ENCODE measurements at regions of chr12 and their contacts with region 1.

Region 1: DNA sequence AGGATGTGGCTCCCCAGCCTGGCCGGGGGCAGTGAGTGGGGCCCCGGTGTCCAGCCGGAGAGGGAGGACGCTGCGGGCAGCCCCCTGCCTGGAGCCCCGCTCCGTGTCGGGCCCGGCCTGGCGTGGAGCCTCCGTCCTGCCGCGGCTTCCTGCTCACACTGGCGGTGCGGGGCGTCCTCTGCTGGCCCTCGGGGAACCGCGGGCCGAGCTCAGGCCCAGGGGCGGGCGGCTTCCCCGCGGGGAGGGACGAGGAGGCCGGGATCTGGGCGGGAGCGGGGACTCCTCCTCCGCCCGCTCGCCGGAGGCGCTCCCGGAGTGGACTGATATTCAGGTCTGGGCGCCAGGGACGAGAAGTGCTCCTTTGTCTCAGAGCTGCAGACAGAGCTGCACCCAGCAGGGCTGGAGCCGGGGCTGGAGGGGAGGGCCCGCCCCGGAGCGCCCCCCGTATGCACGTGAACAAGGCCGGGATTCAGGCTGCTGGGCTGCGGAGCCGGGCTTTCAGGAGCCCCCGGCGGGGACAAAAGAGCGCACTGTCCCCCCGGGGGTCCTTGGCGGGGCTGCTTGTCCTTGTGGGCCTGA is 2.2 kb downstream of the MMP17 start:
- DNase-seq: peak; percentile 71
- H3K4me3 ChIP-seq: peak overlapping the region; percentile 51 to 67 (median 61)
- H3K27ac ChIP-seq: no peak overlapping the region
- H3K4me1 ChIP-seq: peaks cover 44% of the 10 kb centered on the region
- H3K27me3 ChIP-seq: no peaks in the 10 kb centered on the region
- CTCF ChIP-seq: peak; percentile 43 to 68

Region 2: DNA sequence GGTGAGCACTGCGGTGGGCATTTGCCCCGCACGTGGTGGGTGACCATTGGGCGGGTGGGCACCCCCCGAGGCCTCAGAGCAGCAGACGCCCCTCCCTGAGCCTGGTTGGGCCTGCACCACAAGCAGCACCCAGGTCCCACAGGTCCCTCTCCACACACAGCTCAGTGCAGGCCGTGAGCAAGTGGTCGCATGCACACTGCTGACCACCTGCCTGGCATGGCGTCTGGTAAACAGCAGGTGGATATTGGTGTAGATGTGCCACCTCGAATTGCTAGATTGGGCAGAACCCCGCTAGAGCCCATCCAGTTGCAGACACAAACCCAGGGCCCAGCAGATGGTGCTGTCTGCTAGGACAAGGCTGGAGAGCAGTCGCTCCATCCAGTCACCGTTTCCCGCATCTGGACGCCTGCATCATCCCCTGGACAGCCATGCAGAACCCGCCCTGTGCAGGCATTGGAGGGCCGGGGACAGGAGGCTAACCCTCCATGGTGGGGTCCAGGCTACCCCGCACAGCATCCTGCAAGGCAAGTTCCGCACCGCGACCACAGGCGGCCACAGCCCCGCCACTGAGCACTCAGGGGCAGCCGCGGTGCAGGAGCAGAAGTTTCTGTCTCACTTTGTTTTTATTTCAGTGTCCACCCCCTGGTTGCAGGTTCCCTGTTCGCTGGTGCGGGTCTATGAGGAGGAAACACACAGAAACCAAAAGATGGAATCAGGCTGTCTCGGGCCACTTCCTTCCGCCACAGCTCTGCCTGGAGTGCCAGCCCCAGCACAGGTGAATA is 1068.7 kb before region 1 on chr12:
- CTCF ChIA-PET with region 1: no interaction called
- dilution Hi-C with region 1: no loop called
- in situ Hi-C with region 1: no loop called
- intact Hi-C with region 1: loop called (anchors 1 kb)
- DNase-seq: peak; percentile 37
- H3K4me3 ChIP-seq: no peak overlapping the region
- H3K27ac ChIP-seq: no peak overlapping the region
- H3K4me1 ChIP-seq: no peaks in the 10 kb centered on the region
- H3K27me3 ChIP-seq: no peaks in the 10 kb centered on the region
- CTCF ChIP-seq: peak; percentile 46 to 80

Region 3: GRCh38 chr12:130871286-130872178 is 958.9 kb before region 1 on chr12 and contains the start of gene RAN:
- CTCF ChIA-PET with region 1: no interaction called
- dilution Hi-C with region 1: no loop called
- in situ Hi-C with region 1: no loop called
- intact Hi-C with region 1: loop called (anchors 5 kb)
- DNase-seq: peak; percentile 91
- H3K4me3 ChIP-seq: peak within 1 kb of the TSS; percentile 80 to 92 (median 86)
- H3K27ac ChIP-seq: peak within 1 kb of the TSS; percentile 95
- H3K4me1 ChIP-seq: peaks cover 25% of the 10 kb centered on the region
- H3K27me3 ChIP-seq: no peaks in the 10 kb centered on the region
- CTCF ChIP-seq: no peak
- total RNA-seq, gene RAN: 537 to 1,117 TPM

Region 4: GRCh38 chr12:131608740-131609690 is 221.4 kb before region 1 on chr12:
- CTCF ChIA-PET with region 1: no interaction called
- dilution Hi-C with region 1: no loop called
- in situ Hi-C with region 1: no loop called
- intact Hi-C with region 1: loop called (anchors 2 kb)
- DNase-seq: peak; percentile 23
- H3K4me3 ChIP-seq: no peak overlapping the region
- H3K27ac ChIP-seq: no peak overlapping the region
- H3K4me1 ChIP-seq: no peaks in the 10 kb centered on the region
- H3K27me3 ChIP-seq: no peaks in the 10 kb centered on the region
- CTCF ChIP-seq: peak; percentile 41 to 66

Region 5: DNA sequence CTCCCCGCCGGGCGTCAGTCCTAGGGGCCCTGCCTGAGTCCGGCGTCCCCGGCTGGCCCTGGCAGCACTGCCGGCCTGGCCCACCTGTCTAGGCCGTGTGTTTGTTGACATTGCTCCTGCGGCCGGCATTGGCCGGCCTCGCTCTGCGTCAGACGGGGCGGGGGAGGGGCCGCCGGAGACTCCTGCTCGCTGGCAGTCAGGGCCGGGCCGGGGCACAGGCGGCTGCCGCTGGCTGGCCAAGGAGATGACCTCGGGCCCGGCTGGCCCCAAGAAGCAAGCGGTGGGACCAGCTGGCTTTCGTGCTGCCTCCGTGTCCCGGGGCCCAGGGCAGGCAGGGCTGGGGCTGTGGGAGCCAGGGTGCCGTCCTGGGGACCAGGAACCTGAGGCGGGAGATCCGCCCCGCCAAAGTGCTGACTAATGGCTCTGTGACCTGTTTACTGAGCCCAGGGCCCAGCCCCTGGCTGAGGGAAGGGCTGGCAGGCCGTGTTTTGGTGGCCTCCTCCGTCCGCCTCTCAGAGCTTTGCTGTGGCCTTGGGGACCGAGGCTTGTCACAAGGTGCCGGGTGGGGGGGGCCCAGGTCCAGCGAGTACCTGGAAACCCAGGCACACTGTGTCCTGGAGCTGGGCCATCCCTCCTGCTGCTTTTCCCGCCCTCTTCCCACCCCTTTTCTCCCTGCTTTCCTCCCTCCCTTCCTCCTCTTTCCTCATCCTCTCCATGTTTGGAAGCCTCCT is 65.8 kb after region 1 on chr12:
- CTCF ChIA-PET with region 1: interaction called, 3 read pairs
- dilution Hi-C with region 1: no loop called
- in situ Hi-C with region 1: no loop called
- intact Hi-C with region 1: loop called (anchors 1 kb)
- DNase-seq: peak; percentile 87
- H3K4me3 ChIP-seq: peak overlapping the region; percentile 60 to 75 (median 63)
- H3K27ac ChIP-seq: peak overlapping the region; percentile 74
- H3K4me1 ChIP-seq: peaks cover 32% of the 10 kb centered on the region
- H3K27me3 ChIP-seq: no peaks in the 10 kb centered on the region
- CTCF ChIP-seq: no peak

Region 6: DNA sequence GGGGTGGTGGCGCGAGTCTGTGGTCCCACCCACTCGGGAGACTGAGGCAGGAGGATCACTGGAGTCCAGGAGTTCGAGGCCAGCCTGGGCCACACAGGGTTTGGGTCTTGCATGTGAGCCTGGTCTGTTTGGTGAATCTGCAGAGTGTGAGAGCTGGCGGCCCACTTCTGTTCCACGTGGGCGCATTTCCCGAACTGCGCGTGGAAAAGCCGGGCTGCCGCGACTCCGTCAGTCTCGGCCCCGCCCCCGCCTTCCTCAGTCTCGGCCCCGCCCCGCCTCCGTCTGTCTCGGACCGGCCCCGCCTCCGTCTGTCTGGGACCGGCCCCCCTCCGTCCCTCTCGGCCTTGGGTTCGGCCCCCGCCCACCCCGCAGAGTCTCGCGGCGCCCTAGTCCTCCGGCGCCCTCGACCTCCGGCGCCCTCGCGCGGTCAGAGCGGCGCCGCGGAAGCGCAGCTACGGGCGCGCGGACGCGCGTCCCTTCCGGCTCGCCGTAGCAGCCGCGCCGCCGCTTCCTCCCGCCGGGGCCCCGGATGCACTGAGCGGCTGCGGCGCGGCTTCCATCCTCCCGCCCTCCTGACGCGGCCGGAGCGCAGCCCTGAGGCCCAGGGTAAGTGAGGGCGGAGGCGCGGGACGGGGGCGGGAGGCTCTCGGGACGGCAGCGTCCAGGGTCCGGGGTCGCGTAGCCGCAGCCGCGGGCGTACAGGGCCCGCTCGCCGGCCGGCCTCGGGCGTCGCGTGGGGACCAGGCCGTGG is 119.2 kb after region 1 on chr12 and contains the start of gene EP400:
- CTCF ChIA-PET with region 1: no interaction called
- dilution Hi-C with region 1: no loop called
- in situ Hi-C with region 1: no loop called
- intact Hi-C with region 1: loop called (anchors 2 kb)
- DNase-seq: peak; percentile 93
- H3K4me3 ChIP-seq: peak within 1 kb of the TSS; percentile 82 to 87 (median 85)
- H3K27ac ChIP-seq: peak within 1 kb of the TSS; percentile 64
- H3K4me1 ChIP-seq: peaks cover 7% of the 10 kb centered on the region
- H3K27me3 ChIP-seq: no peaks in the 10 kb centered on the region
- CTCF ChIP-seq: peak; percentile 35 to 53
- total RNA-seq, gene EP400: 15.5 to 48.0 TPM

Measured in mammary epithelial cell (primary cell).